ENCODE measurements at regions of chr1 and their contacts with region 1.

Region 1: GRCh38 chr1:245986404-245987220 is 520.5 kb downstream of the SMYD3 start:
- DNase-seq: no peak
- ATAC-seq: no peak
- H3K4me3 ChIP-seq: no peak overlapping the region
- H3K27ac ChIP-seq: no peak overlapping the region
- H3K4me1 ChIP-seq: peaks cover 16% of the 10 kb centered on the region
- H3K27me3 ChIP-seq: no peaks in the 10 kb centered on the region
- CTCF ChIP-seq: no peak
- EP300 ChIP-seq: no peak
- POLR2A ChIP-seq: no peak
- RAD21 ChIP-seq: no peak

Region 2: DNA sequence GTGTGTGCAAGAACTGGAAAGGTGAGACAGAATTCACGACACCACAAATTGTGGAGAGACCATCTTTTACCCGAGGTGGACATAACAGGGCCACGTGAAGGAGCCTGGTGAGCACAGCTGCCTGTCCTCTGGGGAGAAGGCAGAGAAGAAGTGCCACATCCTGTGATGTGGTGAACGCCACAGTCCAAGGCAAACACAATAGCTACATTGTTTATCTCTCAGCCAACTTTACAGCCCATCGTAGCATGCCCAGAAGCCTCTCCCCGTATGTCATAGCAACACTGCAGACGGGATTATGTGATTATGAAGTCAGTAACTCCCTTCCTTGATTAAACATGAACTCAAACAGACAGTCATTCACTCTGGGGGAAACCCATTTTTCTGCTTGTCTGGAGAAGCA is 91.8 kb before region 1 on chr1:
- CTCF ChIA-PET with region 1: interaction called, 17 read pairs
- POLR2A ChIA-PET with region 1: interaction called, 4 read pairs
- RAD21 ChIA-PET with region 1: interaction called, 8 read pairs
- SMC1A ChIA-PET with region 1: interaction called, 10 read pairs
- in situ Hi-C with region 1: no loop called
- intact Hi-C with region 1: no loop called
- DNase-seq: peak; percentile 59
- ATAC-seq: peak; percentile 95
- H3K4me3 ChIP-seq: no peak overlapping the region
- H3K27ac ChIP-seq: peak overlapping the region; percentile 47
- H3K4me1 ChIP-seq: peaks cover 4% of the 10 kb centered on the region; the same call in 1 of the 2 replicates
- H3K27me3 ChIP-seq: no peaks in the 10 kb centered on the region
- CTCF ChIP-seq: no peak
- EP300 ChIP-seq: peak; percentile 48 to 67; a peak in 2 of 4 replicates
- POLR2A ChIP-seq: no peak
- RAD21 ChIP-seq: no peak

Region 3: GRCh38 chr1:245901037-245901436 is 85.6 kb before region 1 on chr1:
- CTCF ChIA-PET with region 1: interaction called, 13 read pairs
- POLR2A ChIA-PET with region 1: interaction called, 4 read pairs
- RAD21 ChIA-PET with region 1: interaction called, 8 read pairs
- SMC1A ChIA-PET with region 1: interaction called, 10 read pairs
- in situ Hi-C with region 1: no loop called
- intact Hi-C with region 1: no loop called
- DNase-seq: peak; percentile 54
- ATAC-seq: peak; percentile 87
- H3K4me3 ChIP-seq: no peak overlapping the region
- H3K27ac ChIP-seq: peak overlapping the region; percentile 2; the same call in 1 of the 2 replicates
- H3K4me1 ChIP-seq: peaks cover 8% of the 10 kb centered on the region; the same call in 1 of the 2 replicates
- H3K27me3 ChIP-seq: no peaks in the 10 kb centered on the region
- CTCF ChIP-seq: no peak
- EP300 ChIP-seq: peak; percentile 58 to 64; a peak in 2 of 4 replicates
- POLR2A ChIP-seq: no peak
- RAD21 ChIP-seq: no peak

Region 4: DNA sequence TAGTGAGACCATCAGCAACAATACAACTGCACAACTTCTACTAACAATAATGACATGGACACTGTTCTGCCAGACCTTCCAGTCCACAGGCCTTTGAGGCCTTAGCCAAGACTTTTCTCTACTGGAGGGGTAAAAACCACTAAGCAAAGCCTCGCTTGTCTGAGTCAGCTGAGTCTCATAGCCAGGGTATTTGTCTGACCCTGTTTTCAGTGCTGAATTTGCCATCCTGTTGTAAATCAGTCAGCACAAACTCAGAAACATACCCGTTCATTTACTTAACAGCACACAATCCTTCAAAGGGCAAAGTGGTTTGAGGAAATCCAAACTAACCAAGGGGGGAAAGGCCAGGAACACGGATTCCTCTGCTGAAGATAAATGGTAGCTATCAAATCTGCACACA is 17.3 kb before region 1 on chr1:
- CTCF ChIA-PET with region 1: interaction called, 4 read pairs
- POLR2A ChIA-PET with region 1: interaction called, 4 read pairs
- RAD21 ChIA-PET with region 1: interaction called, 4 read pairs
- SMC1A ChIA-PET with region 1: interaction called, 11 read pairs
- in situ Hi-C with region 1: no loop called
- intact Hi-C with region 1: no loop called
- DNase-seq: no peak
- ATAC-seq: no peak
- H3K4me3 ChIP-seq: no peak overlapping the region
- H3K27ac ChIP-seq: no peak overlapping the region
- H3K4me1 ChIP-seq: no peaks in the 10 kb centered on the region
- H3K27me3 ChIP-seq: no peaks in the 10 kb centered on the region
- CTCF ChIP-seq: no peak
- EP300 ChIP-seq: no peak
- POLR2A ChIP-seq: no peak
- RAD21 ChIP-seq: no peak

Measured in GM12878 (cell line).